ENCODE measurements at regions of chr9 and their contacts with region 1.

Region 1: DNA sequence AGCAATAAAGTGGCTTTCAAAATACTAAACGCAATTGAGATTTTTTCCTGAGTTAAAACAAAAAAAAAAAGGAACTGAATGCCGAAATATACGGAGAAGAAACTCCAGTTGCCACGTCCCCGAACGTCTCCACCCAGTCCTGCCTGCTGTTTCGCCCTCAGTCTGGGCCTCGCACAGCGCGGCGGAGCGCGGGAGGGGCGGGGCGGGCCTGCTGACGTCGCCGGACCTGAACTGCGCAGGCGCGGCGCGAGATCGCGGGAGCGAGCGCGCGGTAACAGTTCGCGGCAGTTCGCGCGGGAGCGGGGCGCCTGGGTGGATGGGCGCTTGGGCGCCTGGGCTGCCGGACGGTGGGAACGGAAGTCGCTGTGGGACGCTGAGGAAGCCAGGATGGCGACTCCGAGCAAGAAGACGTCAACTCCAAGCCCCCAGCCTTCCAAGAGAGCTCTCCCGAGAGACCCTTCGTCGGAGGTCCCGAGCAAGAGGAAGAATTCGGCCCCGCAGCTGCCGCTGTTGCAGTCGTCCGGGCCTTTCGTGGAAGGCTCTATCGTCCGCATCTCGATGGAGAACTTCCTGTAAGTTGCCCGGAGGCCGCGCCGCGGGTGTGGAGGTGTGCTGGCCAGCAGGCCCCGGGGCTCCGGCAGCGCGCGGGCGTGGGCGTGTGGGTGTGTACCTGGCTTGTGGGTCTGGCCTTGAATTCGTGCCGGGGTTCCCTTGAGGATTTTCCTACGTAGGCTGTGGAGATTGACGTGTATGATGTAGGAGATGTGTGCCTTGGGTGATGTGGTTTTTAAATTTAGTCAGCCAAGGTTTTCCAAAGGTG is at the start of gene SMC5:
- H3K4me3 ChIP-seq: peak within 1 kb of the TSS; percentile 69
- H3K27ac ChIP-seq: peak within 1 kb of the TSS; percentile 94
- H3K4me1 ChIP-seq: peaks cover 3% of the 10 kb centered on the region; the same call in 1 of the 2 replicates
- CTCF ChIP-seq: no peak; the same call in 1 of the 2 replicates

Region 2: DNA sequence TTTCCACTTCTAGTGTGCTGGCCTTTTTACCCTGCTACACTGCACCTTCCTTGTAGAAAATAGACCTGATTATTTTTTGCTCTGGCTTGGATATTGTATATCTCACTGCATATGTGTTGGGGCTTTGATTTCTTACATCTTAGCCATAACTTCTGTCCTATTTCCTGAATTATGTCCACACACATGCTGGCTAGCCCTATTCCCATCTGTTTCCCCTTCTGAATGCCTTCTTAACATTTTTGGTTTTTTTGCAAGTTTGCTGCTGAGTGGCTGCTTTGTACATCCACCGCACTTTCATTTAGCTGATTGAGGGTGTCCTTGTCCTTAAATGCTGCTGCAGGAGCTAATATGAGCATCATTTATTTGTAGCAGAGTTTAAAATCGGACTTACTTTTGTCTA is 411.4 kb before region 1 on chr9:
- CTCF ChIA-PET with region 1: no interaction called
- POLR2A ChIA-PET with region 1: no interaction called
- H3K4me3 ChIP-seq: no peak overlapping the region
- H3K27ac ChIP-seq: no peak overlapping the region
- H3K4me1 ChIP-seq: no peaks in the 10 kb centered on the region; the same call in 1 of the 2 replicates
- CTCF ChIP-seq: no peak

Region 3: DNA sequence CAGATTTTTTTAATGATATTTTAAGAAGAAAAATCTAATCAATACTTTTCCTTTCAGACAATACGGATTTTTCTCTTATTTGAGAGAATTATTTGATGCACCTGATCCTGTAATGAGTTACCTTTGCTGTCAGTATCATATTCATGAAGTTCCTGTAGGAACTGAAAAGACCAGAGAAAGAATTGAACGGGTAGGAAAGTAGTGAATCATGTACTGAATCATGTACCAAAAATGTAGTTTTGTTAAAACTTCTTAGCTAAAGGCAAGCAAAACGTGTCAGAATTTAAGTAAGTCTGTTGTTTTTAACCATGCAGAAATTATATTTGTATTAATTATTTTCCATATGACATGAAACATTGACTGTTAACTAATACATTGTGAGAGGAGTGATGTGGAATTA is 56.5 kb after region 1 on chr9:
- CTCF ChIA-PET with region 1: no interaction called
- POLR2A ChIA-PET with region 1: no interaction called
- H3K4me3 ChIP-seq: no peak overlapping the region
- H3K27ac ChIP-seq: no peak overlapping the region
- H3K4me1 ChIP-seq: no peaks in the 10 kb centered on the region
- CTCF ChIP-seq: no peak

Region 4: DNA sequence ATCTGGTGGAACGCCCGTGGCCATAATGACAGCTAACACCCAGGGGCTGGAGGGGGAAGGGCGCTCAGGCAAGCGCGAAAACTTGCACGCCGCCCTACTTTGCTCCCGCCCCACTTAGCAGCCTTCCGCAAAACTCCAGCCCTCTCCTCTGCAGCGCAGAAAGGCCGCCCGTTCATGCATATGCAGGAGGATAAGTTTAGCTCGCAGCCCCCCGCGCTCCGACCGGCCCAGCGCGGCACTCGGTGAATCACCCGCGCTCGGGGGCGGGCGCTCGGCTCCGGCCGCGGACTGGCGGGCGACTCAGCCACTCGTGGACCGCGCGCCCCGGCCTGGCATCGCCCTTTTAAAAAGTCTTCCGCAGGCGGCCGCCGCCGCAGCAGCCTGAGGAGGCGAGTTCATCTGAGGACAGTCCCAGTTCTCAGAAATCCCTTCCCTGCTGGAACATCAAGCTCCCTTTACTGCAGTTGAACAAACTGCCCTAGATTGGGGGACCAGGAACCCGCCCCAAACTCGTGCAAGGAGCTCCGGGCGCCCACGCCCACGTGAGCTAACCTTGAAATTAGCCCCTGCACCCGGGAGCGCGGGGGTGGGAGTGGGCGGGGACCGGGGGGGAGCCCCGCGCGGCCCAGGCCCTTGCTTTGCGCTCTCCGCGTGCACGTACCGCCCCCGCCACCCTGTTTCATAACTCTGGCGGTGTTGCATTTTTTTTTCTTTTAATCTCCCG is 160.1 kb after region 1 on chr9:
- CTCF ChIA-PET with region 1: no interaction called
- POLR2A ChIA-PET with region 1: interaction called, 14 read pairs
- H3K4me3 ChIP-seq: peak overlapping the region; percentile 60
- H3K27ac ChIP-seq: peak overlapping the region; percentile 100
- H3K4me1 ChIP-seq: peaks cover 8% of the 10 kb centered on the region
- CTCF ChIP-seq: no peak

Region 5: GRCh38 chr9:70484210-70485130 is 225.6 kb after region 1 on chr9:
- CTCF ChIA-PET with region 1: no interaction called
- POLR2A ChIA-PET with region 1: no interaction called
- H3K4me3 ChIP-seq: no peak overlapping the region
- H3K27ac ChIP-seq: no peak overlapping the region
- H3K4me1 ChIP-seq: no peaks in the 10 kb centered on the region
- CTCF ChIP-seq: no peak